ENCODE measurements at regions of chr5 and their contacts with region 1.

Region 1: GRCh38 chr5:142151436-142152383 is 43.1 kb downstream of the NDFIP1 start:
- DNase-seq: peak; percentile 64
- ATAC-seq: peak; percentile 70
- H3K4me3 ChIP-seq: no peak overlapping the region
- H3K27ac ChIP-seq: no peak overlapping the region
- H3K4me1 ChIP-seq: peaks cover 13% of the 10 kb centered on the region
- H3K27me3 ChIP-seq: no peaks in the 10 kb centered on the region
- CTCF ChIP-seq: peak; percentile 87

Region 2: DNA sequence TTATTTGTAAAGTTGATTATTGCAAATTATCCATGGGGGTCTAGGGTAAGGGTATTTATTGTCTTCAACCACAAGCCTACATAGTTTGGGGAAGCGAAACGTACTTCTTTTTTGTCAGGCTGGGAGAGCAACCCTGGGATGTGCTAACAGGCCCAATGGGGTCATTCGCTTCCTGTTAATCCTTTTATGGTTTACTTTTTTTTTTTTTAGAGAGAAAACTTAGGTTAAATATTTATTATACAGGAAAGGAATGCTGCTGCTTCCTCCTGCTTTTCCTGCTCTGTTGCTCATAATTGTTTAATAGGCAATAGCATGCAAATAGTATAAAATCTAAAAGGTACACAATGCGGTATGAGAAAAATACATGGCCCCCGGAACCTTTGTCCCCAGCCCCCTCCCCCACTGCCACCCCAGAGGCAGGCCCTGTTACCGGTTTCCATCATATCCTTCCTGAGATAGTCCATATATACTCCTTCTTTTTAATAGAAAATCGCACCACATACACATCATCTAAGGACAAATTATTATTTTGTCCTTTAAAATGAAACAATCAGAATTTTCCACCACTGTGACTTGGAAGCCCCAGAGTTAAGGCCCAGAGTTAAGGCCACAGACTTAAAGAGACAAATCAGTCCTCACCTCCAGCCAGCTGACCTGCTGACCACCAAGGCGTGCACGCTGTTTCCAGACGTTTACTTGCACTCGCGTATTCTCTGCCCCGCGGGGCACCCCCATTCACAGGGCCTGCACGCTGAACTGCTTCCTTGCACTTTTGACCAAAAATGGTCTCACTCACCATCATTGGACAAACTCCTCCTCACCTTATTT is 40.8 kb after region 1 on chr5:
- CTCF ChIA-PET with region 1: no interaction called
- POLR2A ChIA-PET with region 1: interaction called, 11 read pairs
- intact Hi-C with region 1: loop called (anchors 2 kb)
- DNase-seq: peak; percentile 43
- ATAC-seq: peak; percentile 58
- H3K4me3 ChIP-seq: no peak overlapping the region
- H3K27ac ChIP-seq: peak overlapping the region; percentile 93
- H3K4me1 ChIP-seq: peaks cover 8% of the 10 kb centered on the region
- H3K27me3 ChIP-seq: no peaks in the 10 kb centered on the region
- CTCF ChIP-seq: no peak

Region 3: GRCh38 chr5:142221091-142221860 is 69.6 kb after region 1 on chr5:
- CTCF ChIA-PET with region 1: interaction called, 4 read pairs
- POLR2A ChIA-PET with region 1: no interaction called
- intact Hi-C with region 1: loop called (anchors 1 kb)
- DNase-seq: peak; percentile 28
- ATAC-seq: peak; percentile 55
- H3K4me3 ChIP-seq: no peak overlapping the region
- H3K27ac ChIP-seq: peak overlapping the region; percentile 43
- H3K4me1 ChIP-seq: peaks cover 41% of the 10 kb centered on the region
- H3K27me3 ChIP-seq: no peaks in the 10 kb centered on the region
- CTCF ChIP-seq: no peak

Region 4: GRCh38 chr5:142324871-142325724 is 173.4 kb after region 1 on chr5 and contains the start of gene SPRY4:
- CTCF ChIA-PET with region 1: no interaction called
- POLR2A ChIA-PET with region 1: no interaction called
- intact Hi-C with region 1: loop called (anchors 5 kb)
- DNase-seq: peak; percentile 97
- ATAC-seq: peak; percentile 36
- H3K4me3 ChIP-seq: peak within 1 kb of the TSS; percentile 89
- H3K27ac ChIP-seq: peak within 1 kb of the TSS; percentile 99
- H3K4me1 ChIP-seq: peaks cover 45% of the 10 kb centered on the region
- H3K27me3 ChIP-seq: no peaks in the 10 kb centered on the region
- CTCF ChIP-seq: 0 out of 2 replicates have a peak, but pooled peaks have one; percentile 1
- total RNA-seq, gene SPRY4: 32.1 and 38.4 TPM in 2 replicates

Region 5: GRCh38 chr5:142548739-142549275 is 397.1 kb after region 1 on chr5:
- CTCF ChIA-PET with region 1: interaction called, 3 read pairs
- POLR2A ChIA-PET with region 1: no interaction called
- intact Hi-C with region 1: loop called (anchors 1 kb)
- DNase-seq: peak; percentile 87
- ATAC-seq: peak; percentile 84
- H3K4me3 ChIP-seq: no peak overlapping the region
- H3K27ac ChIP-seq: no peak overlapping the region
- H3K4me1 ChIP-seq: peaks cover 14% of the 10 kb centered on the region
- H3K27me3 ChIP-seq: no peaks in the 10 kb centered on the region
- CTCF ChIP-seq: peak; percentile 89